ENCODE measurements at regions of chr3 and their contacts with region 1.

Region 1: GRCh38 chr3:111859974-111860859 is 1.2 kb downstream of the PHLDB2 start:
- DNase-seq: peak; percentile 73 to 90 (median 84)
- ATAC-seq: peak; percentile 84 to 88
- H3K4me3 ChIP-seq: peak overlapping the region; percentile 89
- H3K27ac ChIP-seq: peak overlapping the region; percentile 95
- H3K4me1 ChIP-seq: peaks cover 6% of the 10 kb centered on the region
- H3K27me3 ChIP-seq: no peaks in the 10 kb centered on the region

Region 2: DNA sequence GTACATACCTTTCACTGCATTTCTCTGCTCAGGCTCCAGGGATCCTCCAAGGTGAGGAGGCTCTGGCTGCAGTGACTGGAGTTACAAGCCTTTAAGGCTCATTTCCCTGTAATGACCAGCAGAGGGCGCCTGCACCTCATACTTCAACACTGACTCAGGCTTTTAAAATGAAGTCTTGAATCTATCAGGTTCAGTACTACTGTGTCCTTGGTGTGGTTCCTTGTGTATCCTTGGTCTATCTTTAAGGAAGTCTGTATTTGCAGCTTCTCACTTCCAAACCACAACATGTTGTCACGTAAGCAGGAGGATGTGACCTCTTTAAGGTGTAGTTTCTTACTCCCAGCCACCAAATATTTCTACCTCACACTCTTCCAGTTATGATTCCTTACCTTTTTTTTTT is 142.6 kb before region 1 on chr3:
- intact Hi-C with region 1: loop called in 3 of 4 experiments (anchors 5 kb)
- DNase-seq: peak; percentile 65 to 83 (median 65)
- ATAC-seq: peak; percentile 88 to 95
- H3K4me3 ChIP-seq: no peak overlapping the region
- H3K27ac ChIP-seq: no peak overlapping the region
- H3K4me1 ChIP-seq: peaks cover 4% of the 10 kb centered on the region
- H3K27me3 ChIP-seq: no peaks in the 10 kb centered on the region

Region 3: GRCh38 chr3:111737706-111738086 is 122.5 kb before region 1 on chr3:
- intact Hi-C with region 1: loop called in 1 of 4 experiments (anchors 10 kb)
- DNase-seq: peak in 1 of 3 donors; percentile 29
- ATAC-seq: peak; percentile 70 to 88
- H3K4me3 ChIP-seq: no peak overlapping the region
- H3K27ac ChIP-seq: peak overlapping the region; percentile 93
- H3K4me1 ChIP-seq: peaks cover 12% of the 10 kb centered on the region
- H3K27me3 ChIP-seq: no peaks in the 10 kb centered on the region

Region 4: GRCh38 chr3:111781561-111782446 is 78.4 kb before region 1 on chr3:
- intact Hi-C with region 1: no loop called
- DNase-seq: no peak
- ATAC-seq: no peak
- H3K4me3 ChIP-seq: no peak overlapping the region
- H3K27ac ChIP-seq: no peak overlapping the region
- H3K4me1 ChIP-seq: peaks cover 4% of the 10 kb centered on the region
- H3K27me3 ChIP-seq: no peaks in the 10 kb centered on the region

Region 5: GRCh38 chr3:111967651-111968274 is 107.5 kb after region 1 on chr3:
- intact Hi-C with region 1: loop called (anchors 5 to 10 kb)
- DNase-seq: peak; percentile 79 to 91 (median 83)
- ATAC-seq: peak; percentile 90 to 92
- H3K4me3 ChIP-seq: no peak overlapping the region
- H3K27ac ChIP-seq: no peak overlapping the region
- H3K4me1 ChIP-seq: peaks cover 2% of the 10 kb centered on the region
- H3K27me3 ChIP-seq: no peaks in the 10 kb centered on the region

Measured in right cardiac atrium (tissue), 5 donors.